ENCODE measurements at regions of chr5 and their contacts with region 1.

Region 1: GRCh38 chr5:43300112-43300511 is 13.1 kb downstream of the HMGCS1 start:
- DNase-seq: no peak
- ATAC-seq: no peak
- H3K4me3 ChIP-seq: no peak overlapping the region
- H3K4me3 Mint-ChIP-seq: no peak overlapping the region
- H3K27ac ChIP-seq: no peak overlapping the region
- H3K27ac Mint-ChIP-seq: no peak overlapping the region
- H3K4me1 ChIP-seq: peaks cover 4% of the 10 kb centered on the region
- H3K4me1 Mint-ChIP-seq: peaks cover 34% of the 10 kb centered on the region
- H3K27me3 ChIP-seq: no peaks in the 10 kb centered on the region
- H3K27me3 Mint-ChIP-seq: no peaks in the 10 kb centered on the region
- CTCF ChIP-seq: no peak

Region 2: GRCh38 chr5:43268188-43268820 is 31.8 kb before region 1 on chr5:
- CTCF ChIA-PET with region 1: no interaction called
- POLR2A ChIA-PET with region 1: no interaction called
- intact Hi-C with region 1: loop called in 1 of 2 experiments (anchors 1 kb)
- DNase-seq: no peak
- ATAC-seq: no peak
- H3K4me3 ChIP-seq: no peak overlapping the region
- H3K4me3 Mint-ChIP-seq: no peak overlapping the region
- H3K27ac ChIP-seq: no peak overlapping the region
- H3K27ac Mint-ChIP-seq: no peak overlapping the region
- H3K4me1 ChIP-seq: no peaks in the 10 kb centered on the region
- H3K4me1 Mint-ChIP-seq: no peaks in the 10 kb centered on the region
- H3K27me3 ChIP-seq: peaks cover 0 to 7% of the 10 kb centered on the region in 2 experiments
- H3K27me3 Mint-ChIP-seq: peaks cover 28% of the 10 kb centered on the region
- CTCF ChIP-seq: no peak

Measured in CD8-positive, alpha-beta T cell (primary cell).